BJ (cell line): ENCODE measurements at regions of chr6 and their contacts with region 1.

Region 1: GRCh38 chr6:43454696-43455530 is 435 bp downstream of the DLK2 start:
- DNase-seq: no peak
- H3K4me3 ChIP-seq: peak overlapping the region; percentile 62
- H3K27me3 ChIP-seq: 0 out of 2 replicates have a peak, but pooled peaks cover 2% of the 10 kb centered on the region
- CTCF ChIP-seq: no peak

Region 2: DNA sequence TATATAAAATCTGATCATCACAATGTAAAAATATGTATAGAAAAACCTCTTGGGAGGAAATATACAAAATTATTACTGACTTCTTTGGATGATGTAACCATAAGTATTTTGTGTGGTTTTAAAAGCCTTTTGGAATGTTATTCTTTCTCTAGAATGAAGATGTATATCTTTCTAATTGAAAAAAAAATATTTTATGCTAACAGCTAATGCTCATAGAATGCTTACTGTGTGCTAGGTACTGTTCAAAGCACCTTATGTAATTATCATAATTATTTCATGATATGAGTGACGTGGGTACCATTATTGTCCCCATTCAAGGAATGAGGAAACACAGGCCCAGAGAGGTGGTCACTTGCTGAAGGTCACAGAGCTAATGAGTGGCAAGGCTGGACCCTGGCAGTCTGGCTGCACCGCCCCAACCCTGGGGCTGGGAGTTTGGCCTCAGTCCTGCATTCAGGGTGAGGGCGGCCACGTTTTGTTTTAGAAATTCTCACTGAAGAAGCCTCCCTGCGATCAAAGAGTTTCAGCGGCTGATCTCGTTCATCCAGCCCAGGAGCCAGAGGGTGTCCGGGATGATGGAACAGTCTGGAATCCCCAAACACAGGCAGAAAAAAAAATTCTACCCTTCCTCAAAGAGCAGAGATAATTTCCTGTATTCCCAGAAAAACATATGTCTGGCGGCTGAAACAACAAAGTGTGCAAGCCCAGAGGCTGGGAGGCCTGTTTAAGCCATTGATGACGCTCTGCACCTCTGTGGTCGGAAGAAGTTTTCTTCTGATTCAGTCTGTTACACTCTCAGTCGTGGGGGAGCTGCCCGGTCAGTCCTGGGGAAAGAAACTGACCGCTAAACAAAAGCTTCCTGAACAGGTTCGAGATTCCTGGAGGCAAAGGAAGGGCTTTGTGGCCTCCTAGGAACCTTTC is 1756.8 kb before region 1 on chr6:
- CTCF ChIA-PET with region 1: no interaction called
- POLR2A ChIA-PET with region 1: no interaction called
- DNase-seq: peak; percentile 89
- H3K4me3 ChIP-seq: no peak overlapping the region
- H3K27me3 ChIP-seq: no peaks in the 10 kb centered on the region
- CTCF ChIP-seq: no peak

Region 3: DNA sequence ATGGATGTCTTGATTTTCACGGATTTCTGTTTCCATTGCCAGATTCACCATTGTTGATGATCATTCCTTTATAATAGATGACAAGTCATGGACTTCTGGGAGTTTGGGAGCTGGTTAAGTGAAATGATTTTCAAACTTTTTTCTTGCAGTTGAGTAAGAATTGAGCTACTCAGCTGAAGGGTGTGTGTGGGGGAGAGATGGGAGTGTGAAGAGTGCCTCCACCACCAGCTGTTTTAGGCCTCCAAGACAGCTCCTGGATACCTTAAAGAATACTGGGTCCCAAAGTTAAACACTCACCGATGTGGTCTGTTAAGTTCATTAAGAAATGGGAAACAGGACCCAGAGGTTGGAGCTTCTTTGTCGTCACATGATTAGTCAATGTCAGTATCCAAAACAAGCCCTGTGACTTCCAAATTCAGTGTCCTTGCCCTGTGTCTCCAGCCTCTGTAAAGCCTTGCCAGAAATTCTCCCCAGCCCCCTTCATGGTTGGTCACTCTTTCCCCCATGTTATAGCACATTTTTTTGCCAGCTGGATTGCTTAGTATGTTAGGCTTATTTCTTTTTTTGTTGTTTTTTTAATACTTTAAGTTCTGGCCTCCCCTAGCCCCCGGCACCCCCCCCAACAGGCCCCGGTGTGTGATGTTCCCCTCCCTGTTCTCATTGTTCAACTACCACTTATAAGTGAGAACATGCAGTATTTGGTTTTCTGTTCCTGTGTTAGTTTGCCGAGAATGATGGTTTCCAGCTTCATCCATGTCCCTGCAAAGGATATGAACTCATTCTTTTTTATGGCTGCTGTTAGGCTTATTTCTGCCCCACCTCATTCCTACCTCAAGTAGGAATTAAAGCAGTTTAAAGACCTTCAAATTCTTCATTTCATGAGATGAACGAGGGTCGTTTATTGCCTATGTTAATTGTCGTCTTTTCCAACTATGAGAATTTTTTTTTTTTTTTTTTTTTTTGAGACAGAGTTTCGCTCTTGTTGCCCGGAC is 646.1 kb before region 1 on chr6:
- CTCF ChIA-PET with region 1: no interaction called
- POLR2A ChIA-PET with region 1: no interaction called
- DNase-seq: no peak
- H3K4me3 ChIP-seq: no peak overlapping the region
- H3K27me3 ChIP-seq: no peaks in the 10 kb centered on the region
- CTCF ChIP-seq: no peak

Region 4: DNA sequence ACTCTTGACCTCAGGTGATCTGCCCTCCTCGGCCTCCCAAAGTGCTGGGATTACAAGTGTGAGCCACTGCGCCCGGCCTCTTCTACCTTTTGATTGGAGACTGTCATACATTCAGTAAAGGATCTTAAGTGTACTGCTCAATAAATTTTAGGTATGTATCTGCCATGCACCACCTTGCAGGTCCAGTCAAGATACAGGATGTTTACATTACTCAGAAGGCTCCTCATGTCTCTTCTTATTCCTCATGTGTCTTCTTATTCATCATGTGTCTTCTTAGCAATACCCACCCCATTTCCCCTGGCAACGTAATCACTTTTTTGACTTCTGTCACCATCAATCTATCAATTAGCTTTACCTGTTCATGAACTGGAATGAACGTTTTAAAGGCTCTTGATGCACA is 449.1 kb before region 1 on chr6:
- CTCF ChIA-PET with region 1: no interaction called
- POLR2A ChIA-PET with region 1: no interaction called
- DNase-seq: no peak
- H3K4me3 ChIP-seq: no peak overlapping the region
- H3K27me3 ChIP-seq: no peaks in the 10 kb centered on the region
- CTCF ChIP-seq: no peak

Region 5: DNA sequence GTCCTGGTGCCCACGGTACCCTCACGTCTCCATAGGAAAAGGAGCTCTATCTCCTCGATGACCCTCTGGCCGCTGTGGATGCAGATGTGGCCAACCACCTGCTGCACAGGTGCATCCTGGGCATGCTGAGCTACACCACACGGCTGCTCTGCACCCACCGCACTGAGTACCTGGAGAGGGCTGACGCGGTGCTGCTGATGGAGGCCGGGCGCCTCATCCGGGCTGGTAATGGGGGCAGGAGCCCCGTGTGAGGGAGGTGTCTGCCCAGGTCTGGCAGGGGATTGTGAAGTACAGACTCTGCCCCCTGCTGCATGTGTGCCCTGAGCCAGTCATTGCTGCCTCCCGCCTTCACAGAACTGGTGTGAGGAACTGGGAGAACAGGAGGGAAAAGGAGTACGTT is 12.0 kb before region 1 on chr6:
- CTCF ChIA-PET with region 1: interaction called, 11 read pairs
- POLR2A ChIA-PET with region 1: no interaction called
- DNase-seq: no peak
- H3K4me3 ChIP-seq: no peak overlapping the region
- H3K27me3 ChIP-seq: no peaks in the 10 kb centered on the region
- CTCF ChIP-seq: no peak

Region 6: GRCh38 chr6:43496370-43497128 is 41.6 kb after region 1 on chr6:
- CTCF ChIA-PET with region 1: interaction called, 134 read pairs
- POLR2A ChIA-PET with region 1: no interaction called
- DNase-seq: no peak
- H3K4me3 ChIP-seq: no peak overlapping the region
- H3K27me3 ChIP-seq: no peaks in the 10 kb centered on the region
- CTCF ChIP-seq: peak; percentile 76